ENCODE measurements at regions of chr17 and their contacts with region 1.

Region 1: GRCh38 chr17:76307299-76307965 is 644 bp downstream of the QRICH2 start:
- DNase-seq: no peak
- ATAC-seq: no peak
- H3K4me3 ChIP-seq: no peak overlapping the region
- H3K27ac ChIP-seq: no peak overlapping the region
- H3K4me1 ChIP-seq: peaks cover 2% of the 10 kb centered on the region; the same call in 1 of the 2 replicates
- H3K27me3 ChIP-seq: no peaks in the 10 kb centered on the region
- CTCF ChIP-seq: no peak
- POLR2A ChIP-seq: no peak
- RAD21 ChIP-seq: no peak

Region 2: GRCh38 chr17:76397687-76398487 is 90.5 kb after region 1 on chr17:
- CTCF ChIA-PET with region 1: interaction called, 9 read pairs
- POLR2A ChIA-PET with region 1: no interaction called
- dilution Hi-C with region 1: no loop called
- in situ Hi-C with region 1: loop called (anchors 5 kb)
- intact Hi-C with region 1: loop called (anchors 1 kb)
- DNase-seq: peak; percentile 85
- ATAC-seq: peak; percentile 99
- H3K4me3 ChIP-seq: no peak overlapping the region
- H3K27ac ChIP-seq: no peak overlapping the region
- H3K4me1 ChIP-seq: no peaks in the 10 kb centered on the region
- H3K27me3 ChIP-seq: no peaks in the 10 kb centered on the region
- CTCF ChIP-seq: peak; percentile 92
- POLR2A ChIP-seq: 0 out of 2 replicates have a peak, but pooled peaks have one; percentile 33
- RAD21 ChIP-seq: peak; percentile 94

Region 3: GRCh38 chr17:76501018-76501826 is 193.8 kb after region 1 on chr17 and contains the start of gene RHBDF2:
- CTCF ChIA-PET with region 1: no interaction called
- POLR2A ChIA-PET with region 1: no interaction called
- dilution Hi-C with region 1: no loop called
- in situ Hi-C with region 1: loop called (anchors 10 kb)
- intact Hi-C with region 1: no loop called
- DNase-seq: peak; percentile 53
- ATAC-seq: peak; percentile 86
- H3K4me3 ChIP-seq: peak within 1 kb of the TSS; percentile 82
- H3K27ac ChIP-seq: peak within 1 kb of the TSS; percentile 26
- H3K4me1 ChIP-seq: peaks cover 27% of the 10 kb centered on the region
- H3K27me3 ChIP-seq: no peaks in the 10 kb centered on the region
- CTCF ChIP-seq: no peak
- POLR2A ChIP-seq: no peak; the same call in 1 of the 2 replicates
- RAD21 ChIP-seq: no peak
- total RNA-seq, gene RHBDF2: 1.3 and 1.4 TPM in 2 replicates

Region 4: DNA sequence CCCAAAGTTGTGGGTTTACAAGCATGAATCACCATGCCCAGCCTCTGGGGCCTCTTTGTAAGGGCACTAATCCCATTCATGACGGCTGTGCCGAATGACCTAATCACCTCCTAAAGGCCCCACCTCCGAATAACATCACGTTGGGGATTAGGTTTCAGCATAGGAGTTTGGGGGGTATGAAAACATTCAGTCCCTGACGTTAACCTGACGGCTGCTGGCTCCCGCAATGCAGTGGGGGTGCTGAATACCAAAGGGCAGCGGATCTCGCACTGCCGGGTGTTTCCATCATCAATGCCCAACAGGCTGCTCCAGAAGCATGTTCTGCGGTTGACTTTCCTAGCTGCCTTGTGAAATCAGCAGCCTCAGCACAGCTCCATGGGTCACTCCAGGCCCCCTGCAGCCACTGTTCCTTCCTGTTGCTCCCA is 712.5 kb after region 1 on chr17:
- CTCF ChIA-PET with region 1: no interaction called
- POLR2A ChIA-PET with region 1: no interaction called
- dilution Hi-C with region 1: no loop called
- in situ Hi-C with region 1: no loop called
- intact Hi-C with region 1: no loop called
- DNase-seq: no peak
- ATAC-seq: no peak
- H3K4me3 ChIP-seq: no peak overlapping the region
- H3K27ac ChIP-seq: no peak overlapping the region
- H3K4me1 ChIP-seq: no peaks in the 10 kb centered on the region
- H3K27me3 ChIP-seq: peaks cover 22% of the 10 kb centered on the region
- CTCF ChIP-seq: no peak
- POLR2A ChIP-seq: no peak
- RAD21 ChIP-seq: no peak